H1 (cell line): ENCODE measurements at regions of chr10 and their contacts with region 1.

Region 1: GRCh38 chr10:28628184-28628893 is 49.0 kb upstream of the BAMBI start:
- DNase-seq: peak; percentile 46 to 87
- H3K4me3 ChIP-seq: no peak overlapping the region
- H3K27ac ChIP-seq: no peak overlapping the region
- H3K4me1 ChIP-seq: peaks cover 0 to 3% (median under 1%) of the 10 kb centered on the region in 4 experiments; a peak in 2 of 7 replicates
- H3K27me3 ChIP-seq: no peaks in the 10 kb centered on the region
- CTCF ChIP-seq: peak; percentile 88 to 94 (median 89)
- EP300 ChIP-seq: no peak
- POLR2A ChIP-seq: no peak
- RAD21 ChIP-seq: peak; percentile 95 to 97

Region 2: GRCh38 chr10:28652696-28653095 is 24.4 kb after region 1 on chr10:
- CTCF ChIA-PET with region 1: interaction called, 12 read pairs
- POLR2A ChIA-PET with region 1: no interaction called
- DNase-seq: no peak
- H3K4me3 ChIP-seq: no peak overlapping the region
- H3K27ac ChIP-seq: no peak overlapping the region
- H3K4me1 ChIP-seq: no peaks in the 10 kb centered on the region
- H3K27me3 ChIP-seq: no peaks in the 10 kb centered on the region
- CTCF ChIP-seq: no peak
- EP300 ChIP-seq: no peak
- POLR2A ChIP-seq: no peak
- RAD21 ChIP-seq: no peak

Region 3: DNA sequence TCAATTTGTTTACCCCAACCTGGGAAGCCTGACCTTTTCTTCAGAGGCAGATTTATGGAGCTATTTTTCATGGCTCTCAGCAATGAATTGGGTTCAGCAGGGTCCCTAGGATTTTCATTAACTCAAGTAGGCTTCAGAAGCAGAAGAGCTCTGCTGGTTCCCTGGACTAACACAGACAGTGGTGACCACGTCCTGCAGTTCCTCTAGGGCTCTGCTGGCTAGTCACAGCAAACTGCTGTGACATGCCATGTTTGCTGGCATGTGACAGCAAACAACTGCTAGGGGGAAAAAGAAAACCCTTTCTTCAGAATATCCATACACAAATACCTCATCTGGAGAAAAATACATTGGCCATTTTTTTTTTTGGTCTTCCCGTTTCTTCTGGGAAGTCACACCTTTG is 62.2 kb after region 1 on chr10:
- CTCF ChIA-PET with region 1: no interaction called
- POLR2A ChIA-PET with region 1: no interaction called
- DNase-seq: no peak
- H3K4me3 ChIP-seq: no peak overlapping the region
- H3K27ac ChIP-seq: no peak overlapping the region
- H3K4me1 ChIP-seq: peaks cover 2 to 14% (median 10%) of the 10 kb centered on the region in 4 experiments; a peak in 6 of 7 replicates
- H3K27me3 ChIP-seq: no peaks in the 10 kb centered on the region
- CTCF ChIP-seq: no peak
- EP300 ChIP-seq: no peak
- POLR2A ChIP-seq: no peak
- RAD21 ChIP-seq: no peak

Region 4: GRCh38 chr10:28991326-28992270 is 363.3 kb after region 1 on chr10:
- CTCF ChIA-PET with region 1: interaction called, 25 read pairs
- POLR2A ChIA-PET with region 1: interaction called, 3 read pairs
- DNase-seq: peak; percentile 17 to 83
- H3K4me3 ChIP-seq: no peak overlapping the region
- H3K27ac ChIP-seq: no peak overlapping the region
- H3K4me1 ChIP-seq: no peaks in the 10 kb centered on the region
- H3K27me3 ChIP-seq: no peaks in the 10 kb centered on the region
- CTCF ChIP-seq: peak; percentile 67 to 88 (median 86)
- EP300 ChIP-seq: no peak
- POLR2A ChIP-seq: no peak
- RAD21 ChIP-seq: peak; percentile 97 to 99